Activated CD4-positive, alpha-beta memory T cell treated with anti-CD3 and anti-CD28 coated beads, Interleukin-2, amount 10 ng/mL, durations not matched to agents 7 days and 5 days (primary cell): ENCODE measurements at regions of chr4 and their contacts with region 1.

Region 1: DNA sequence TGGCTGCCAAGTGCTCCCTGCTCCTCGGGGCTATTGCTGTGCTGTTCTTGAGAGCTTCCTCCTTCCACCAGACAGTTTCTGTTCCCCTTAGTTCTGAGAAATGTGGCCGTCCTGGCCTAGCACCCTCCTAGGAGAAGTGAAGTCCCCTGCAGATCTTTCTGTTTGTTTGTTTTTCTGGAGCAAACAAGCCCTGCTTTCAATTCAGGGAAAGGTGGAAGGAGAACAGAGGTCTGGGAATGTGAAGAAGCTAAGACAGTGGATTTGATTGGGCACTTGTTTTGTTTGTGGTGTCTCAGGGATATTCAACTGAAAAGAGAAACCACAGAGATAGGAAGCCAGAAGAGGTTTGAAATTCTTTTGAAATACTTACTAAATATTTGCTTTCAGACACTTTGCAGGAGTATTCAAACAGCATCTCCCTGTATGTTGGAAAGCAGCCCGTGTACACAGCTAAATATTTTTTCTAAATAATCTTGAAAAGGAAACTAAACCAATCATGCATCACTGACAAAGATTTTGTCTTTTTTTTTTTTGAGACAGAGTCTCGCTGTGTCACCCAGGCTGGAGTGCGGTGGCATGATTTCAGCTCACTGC is 36.5 kb upstream of the PPM1K start:
- DNase-seq: peak; percentile 54
- H3K4me3 Mint-ChIP-seq: peak overlapping the region; percentile 75
- H3K27ac Mint-ChIP-seq: peak overlapping the region; percentile 96
- H3K4me1 Mint-ChIP-seq: peaks cover 30% of the 10 kb centered on the region
- H3K27me3 Mint-ChIP-seq: no peaks in the 10 kb centered on the region

Region 2: GRCh38 chr4:88378691-88379559 is 58.0 kb after region 1 on chr4 and contains the start of gene HERC6:
- CTCF ChIA-PET with region 1: interaction called, 5 read pairs
- POLR2A ChIA-PET with region 1: interaction called, 12 read pairs
- DNase-seq: peak; percentile 93
- H3K4me3 Mint-ChIP-seq: peak within 1 kb of the TSS; percentile 79
- H3K27ac Mint-ChIP-seq: peak within 1 kb of the TSS; percentile 92
- H3K4me1 Mint-ChIP-seq: peaks cover 61% of the 10 kb centered on the region
- H3K27me3 Mint-ChIP-seq: no peaks in the 10 kb centered on the region
- total RNA-seq, gene HERC6: 47.5 to 49.0 TPM